Heart left ventricle (tissue), 16 donors: ENCODE measurements at regions of chr9 and their contacts with region 1.

Region 1: DNA sequence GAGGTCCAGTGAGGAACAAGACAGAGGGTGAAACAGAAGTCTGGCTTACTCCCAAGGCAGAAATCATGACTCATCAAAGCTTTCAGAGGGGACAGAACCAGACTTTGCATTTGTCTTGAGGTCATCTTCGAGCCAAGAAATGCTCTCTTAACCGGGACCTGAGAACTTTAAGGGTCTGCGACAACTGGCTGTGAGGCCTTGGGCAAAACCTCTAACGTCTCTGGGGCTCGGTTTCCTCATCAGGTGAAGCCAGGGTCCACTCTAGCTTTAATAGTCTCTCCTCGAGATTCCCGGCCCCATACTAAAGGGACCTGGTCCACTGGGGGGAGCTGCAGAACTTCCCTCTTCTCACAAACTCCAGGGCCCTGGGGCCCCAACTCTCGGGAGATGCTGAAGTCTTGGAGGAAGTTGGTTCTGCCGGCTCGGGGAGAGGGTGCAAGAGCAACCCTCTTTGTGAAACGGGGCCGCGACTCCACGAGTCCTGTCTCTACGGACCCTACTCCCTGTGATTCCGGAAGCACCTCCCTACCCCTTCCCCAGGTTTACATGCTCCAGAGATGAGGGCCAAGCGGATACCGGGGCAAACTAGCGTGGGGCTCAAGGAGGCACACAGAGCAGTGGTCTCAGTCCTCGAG is 2.6 kb downstream of the GLIS3 start:
- DNase-seq: peak; percentile 68 to 83 (median 78)
- ATAC-seq: peak in 3 of 4 donors; percentile 50 to 65 (median 53)
- H3K4me3 ChIP-seq: peak overlapping the region; percentile 67 to 91 (median 76)
- H3K27ac ChIP-seq: peak overlapping the region; percentile 72 to 93 (median 85)
- H3K4me1 ChIP-seq: peaks cover 0 to 47% (median 2%) of the 10 kb centered on the region in 12 donors
- H3K27me3 ChIP-seq: peaks cover 0 to 13% (median 0%) of the 10 kb centered on the region in 9 donors
- CTCF ChIP-seq: peak in 9 of 12 donors; percentile 21 to 60 (median 45)
- POLR2A ChIP-seq: no peak

Region 2: DNA sequence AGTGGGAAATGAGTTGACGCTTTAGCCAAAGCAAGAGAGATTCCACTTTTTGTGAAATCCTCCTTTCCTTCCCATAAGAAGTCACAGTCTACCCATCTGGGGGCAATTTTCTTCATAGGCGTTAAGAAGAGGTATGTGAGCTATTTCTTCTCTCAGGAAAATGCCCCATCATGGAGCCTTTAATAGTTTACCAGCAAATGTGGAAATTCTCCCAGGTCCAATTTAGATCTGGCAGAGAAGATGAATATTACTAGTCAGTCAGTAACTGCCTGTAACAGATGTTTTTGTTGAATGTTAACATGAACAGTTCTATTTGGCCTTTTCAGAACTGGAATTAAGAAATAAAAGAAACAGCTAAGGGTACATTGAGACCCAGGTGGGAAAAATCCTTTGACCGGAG is 615.1 kb before region 1 on chr9:
- intact Hi-C with region 1: no loop called
- DNase-seq: no peak
- ATAC-seq: no peak
- H3K4me3 ChIP-seq: no peak overlapping the region
- H3K27ac ChIP-seq: no peak overlapping the region
- H3K4me1 ChIP-seq: no peaks in the 10 kb centered on the region
- H3K27me3 ChIP-seq: no peaks in the 10 kb centered on the region
- CTCF ChIP-seq: no peak
- POLR2A ChIP-seq: no peak

Region 3: GRCh38 chr9:3906432-3907213 is 390.6 kb before region 1 on chr9:
- intact Hi-C with region 1: loop called in 1 of 10 experiments (anchors 10 kb)
- DNase-seq: no peak
- ATAC-seq: peak; percentile 55 to 90 (median 84)
- H3K4me3 ChIP-seq: no peak overlapping the region
- H3K27ac ChIP-seq: peak overlapping the region in 1 of 12 donors; percentile 23
- H3K4me1 ChIP-seq: peaks cover 0 to 10% (median 0%) of the 10 kb centered on the region in 12 donors
- H3K27me3 ChIP-seq: no peaks in the 10 kb centered on the region
- CTCF ChIP-seq: no peak
- POLR2A ChIP-seq: no peak

Region 4: GRCh38 chr9:4077499-4078102 is 219.7 kb before region 1 on chr9:
- intact Hi-C with region 1: loop called in 4 of 10 experiments (anchors 5 to 10 kb)
- DNase-seq: peak; percentile 74 to 88 (median 79)
- ATAC-seq: peak; percentile 71 to 92 (median 84)
- H3K4me3 ChIP-seq: no peak overlapping the region
- H3K27ac ChIP-seq: peak overlapping the region in 5 of 12 donors; percentile 12 to 40 (median 14)
- H3K4me1 ChIP-seq: peaks cover 0 to 7% (median 0%) of the 10 kb centered on the region in 12 donors
- H3K27me3 ChIP-seq: no peaks in the 10 kb centered on the region
- CTCF ChIP-seq: peak; percentile 40 to 72 (median 55)
- POLR2A ChIP-seq: no peak

Region 5: DNA sequence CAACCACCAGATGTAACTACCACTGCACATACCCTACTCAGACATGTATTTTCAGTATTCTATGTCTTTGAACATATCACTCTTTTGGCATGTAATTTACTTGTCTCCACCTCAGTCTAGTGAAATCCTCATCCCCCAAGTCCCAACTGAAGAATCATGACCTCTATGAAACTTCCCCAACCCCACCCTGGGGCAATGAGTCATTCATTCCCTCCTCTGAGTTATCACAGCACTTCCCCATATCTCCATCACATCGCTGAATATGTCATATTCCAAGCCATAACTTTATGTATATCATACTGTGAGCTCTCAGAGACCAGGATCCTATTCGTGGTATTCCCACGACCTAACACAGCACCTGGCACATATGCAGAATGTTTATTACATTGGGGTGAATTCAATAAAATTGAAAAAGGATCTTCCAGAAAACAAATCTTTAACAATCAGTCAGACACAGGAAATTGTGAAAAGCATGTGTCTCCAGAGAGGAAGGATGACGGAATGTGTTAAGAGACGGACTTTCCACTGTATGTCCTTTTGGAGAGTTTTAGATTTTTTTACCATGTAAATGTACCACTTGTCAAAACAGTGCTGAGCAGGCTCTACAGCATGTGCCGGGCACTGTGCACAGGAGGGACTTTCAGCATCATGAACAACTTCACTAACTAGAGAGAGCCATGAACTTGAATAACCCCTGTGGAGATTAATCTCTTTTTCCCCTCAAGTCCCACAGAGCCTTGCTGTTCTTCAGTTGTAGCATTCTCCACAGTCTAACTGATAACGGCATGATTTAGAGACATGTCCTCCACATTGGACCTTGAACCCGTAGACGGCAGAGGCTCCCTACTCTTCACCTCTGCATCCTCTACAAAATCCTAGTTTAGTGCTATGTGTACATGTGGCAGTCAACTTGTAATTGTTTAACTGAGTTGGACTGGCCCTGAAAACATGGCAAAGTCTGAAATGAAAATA is 210.9 kb before region 1 on chr9:
- intact Hi-C with region 1: loop called in 2 of 10 experiments (anchors 10 kb)
- DNase-seq: peak in 2 of 5 donors; percentile 18 to 43
- ATAC-seq: peak; percentile 41 to 71 (median 65)
- H3K4me3 ChIP-seq: no peak overlapping the region
- H3K27ac ChIP-seq: peak overlapping the region in 7 of 12 donors; percentile 7 to 64 (median 59)
- H3K4me1 ChIP-seq: peaks cover 0 to 27% (median 10%) of the 10 kb centered on the region in 12 donors
- H3K27me3 ChIP-seq: no peaks in the 10 kb centered on the region
- CTCF ChIP-seq: no peak
- POLR2A ChIP-seq: no peak

Region 6: GRCh38 chr9:4235871-4236804 is 61.1 kb before region 1 on chr9:
- intact Hi-C with region 1: loop called in 1 of 10 experiments (anchors 2 kb)
- DNase-seq: no peak
- ATAC-seq: peak in 1 of 4 donors; percentile 53
- H3K4me3 ChIP-seq: no peak overlapping the region
- H3K27ac ChIP-seq: peak overlapping the region in 6 of 12 donors; percentile 2 to 80 (median 14)
- H3K4me1 ChIP-seq: peaks cover 0 to 11% (median 4%) of the 10 kb centered on the region in 12 donors
- H3K27me3 ChIP-seq: no peaks in the 10 kb centered on the region
- CTCF ChIP-seq: no peak
- POLR2A ChIP-seq: no peak